ENCODE measurements at regions of chr4 and their contacts with region 1.

Region 1: DNA sequence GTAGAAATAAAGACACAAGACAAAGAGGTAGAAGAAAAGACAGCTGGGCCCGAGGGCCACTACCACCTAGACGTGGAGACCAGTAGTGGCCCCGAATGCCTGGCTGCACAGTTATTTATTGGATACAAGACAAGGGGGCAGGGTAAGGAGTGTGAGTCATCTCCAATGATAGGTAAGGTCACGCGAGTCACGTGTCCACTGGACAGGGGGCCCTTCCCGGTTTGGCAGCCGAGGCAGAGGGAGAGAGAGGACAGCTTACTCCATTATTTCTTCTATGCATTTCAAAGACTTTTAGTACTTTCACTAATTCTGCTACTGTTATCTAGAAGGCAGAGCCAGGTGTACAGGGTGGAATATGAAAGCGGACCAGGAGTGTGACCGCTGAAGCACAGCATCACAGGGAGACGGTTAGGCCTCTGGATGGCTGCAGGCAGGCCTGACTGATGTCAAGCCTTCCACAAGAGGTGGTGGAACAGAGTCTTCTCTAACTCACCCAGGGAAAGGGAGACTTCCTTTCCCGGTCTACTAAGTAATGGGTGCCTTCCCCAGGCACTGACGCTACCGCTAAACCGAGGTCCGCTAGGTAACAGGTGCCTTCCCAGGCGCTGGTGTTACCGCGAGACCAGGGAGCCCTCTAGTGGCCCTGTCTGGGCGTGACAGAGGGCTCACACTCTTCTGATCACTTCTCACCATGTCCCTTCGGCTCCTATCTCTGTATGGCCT is 44.9 kb downstream of the ZBTB49 start:
- DNase-seq: peak; percentile 55 to 84 (median 59)
- ATAC-seq: peak; percentile 86
- H3K4me3 ChIP-seq: no peak overlapping the region
- H3K27ac ChIP-seq: no peak overlapping the region
- H3K4me1 ChIP-seq: peaks cover 13 to 16% of the 10 kb centered on the region in 2 experiments; a peak in 4 of 5 replicates
- H3K27me3 ChIP-seq: peaks cover 0 to 4% of the 10 kb centered on the region in 2 experiments; a peak in 1 of 5 replicates
- CTCF ChIP-seq: peak; percentile 82 to 86 (median 83)
- EP300 ChIP-seq: no peak
- POLR2A ChIP-seq: no peak
- RAD21 ChIP-seq: peak; percentile 78 to 93

Region 2: DNA sequence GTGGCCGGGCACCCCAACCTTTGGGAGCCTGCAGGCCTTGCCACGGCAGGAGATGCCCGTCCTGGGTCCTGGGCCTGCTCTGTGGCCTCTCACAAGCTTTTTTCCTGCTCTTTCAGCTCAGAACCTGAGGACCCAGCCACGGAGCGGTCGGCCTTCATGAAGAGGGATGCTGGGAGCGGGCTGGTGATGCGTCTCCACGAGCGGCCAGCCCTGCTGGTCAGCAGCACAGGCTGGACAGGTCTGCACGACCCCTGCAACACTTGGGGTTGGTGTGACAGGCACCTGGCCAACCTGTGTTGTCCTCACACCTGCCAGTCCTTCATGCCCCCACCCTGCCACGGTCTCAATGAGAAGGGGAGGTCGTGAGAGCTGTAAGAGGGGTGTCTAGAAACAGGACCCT is 398.8 kb before region 1 on chr4:
- CTCF ChIA-PET with region 1: no interaction called
- POLR2A ChIA-PET with region 1: no interaction called
- in situ Hi-C with region 1: no loop called
- intact Hi-C with region 1: no loop called
- DNase-seq: no peak
- ATAC-seq: no peak
- H3K4me3 ChIP-seq: no peak overlapping the region
- H3K27ac ChIP-seq: no peak overlapping the region
- H3K4me1 ChIP-seq: peaks cover 9 to 17% of the 10 kb centered on the region in 2 experiments; a peak in 4 of 5 replicates
- H3K27me3 ChIP-seq: no peaks in the 10 kb centered on the region
- CTCF ChIP-seq: no peak
- EP300 ChIP-seq: no peak
- POLR2A ChIP-seq: no peak
- RAD21 ChIP-seq: no peak

Region 3: GRCh38 chr4:4248029-4248884 is 86.7 kb before region 1 on chr4 and contains the start of gene TMEM128:
- CTCF ChIA-PET with region 1: interaction called, 14 read pairs
- POLR2A ChIA-PET with region 1: interaction called, 3 read pairs
- in situ Hi-C with region 1: loop called (anchors 5 kb)
- intact Hi-C with region 1: loop called (anchors 1 kb)
- DNase-seq: peak; percentile 93 to 96 (median 94)
- ATAC-seq: peak; percentile 97
- H3K4me3 ChIP-seq: peak within 1 kb of the TSS; percentile 89
- H3K27ac ChIP-seq: peak within 1 kb of the TSS; percentile 92
- H3K4me1 ChIP-seq: peaks cover 4 to 8% of the 10 kb centered on the region in 2 experiments; a peak in 3 of 5 replicates
- H3K27me3 ChIP-seq: peaks cover 0 to 2% of the 10 kb centered on the region in 2 experiments; a peak in 1 of 5 replicates
- CTCF ChIP-seq: 0 out of 6 replicates have a peak, but pooled peaks have one; percentile 8 to 25 (median 9)
- EP300 ChIP-seq: peak; percentile 34
- POLR2A ChIP-seq: peak; percentile 96
- RAD21 ChIP-seq: 0 out of 4 replicates have a peak, but pooled peaks have one; percentile 2 to 9
- polyA plus RNA-seq, gene TMEM128: 9.1 to 11.1 TPM

Region 4: DNA sequence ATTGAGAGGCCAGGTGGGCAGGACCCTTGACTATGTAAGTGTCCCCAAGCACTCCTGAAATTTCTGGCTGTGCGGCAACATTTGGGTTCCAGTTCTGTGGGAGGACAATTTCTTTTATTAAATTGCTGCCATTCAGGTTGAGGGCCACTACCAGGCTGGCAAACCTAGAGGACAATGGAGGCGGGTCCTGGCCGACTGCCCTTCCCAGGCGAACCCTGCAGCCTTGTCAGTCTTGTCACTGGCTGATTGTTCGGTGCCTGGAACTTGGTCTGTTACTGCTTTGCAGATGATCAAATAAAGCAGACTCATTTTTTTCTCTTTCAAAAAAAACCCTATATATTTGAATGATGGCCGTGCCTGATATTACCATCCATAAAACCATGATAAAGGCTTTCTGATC is 80.3 kb before region 1 on chr4:
- CTCF ChIA-PET with region 1: interaction called, 14 read pairs
- POLR2A ChIA-PET with region 1: interaction called, 3 read pairs
- in situ Hi-C with region 1: loop called (anchors 5 kb)
- intact Hi-C with region 1: loop called (anchors 1 kb)
- DNase-seq: no peak
- ATAC-seq: no peak
- H3K4me3 ChIP-seq: no peak overlapping the region
- H3K27ac ChIP-seq: no peak overlapping the region
- H3K4me1 ChIP-seq: no peaks in the 10 kb centered on the region
- H3K27me3 ChIP-seq: peaks cover 22 to 33% of the 10 kb centered on the region in 2 experiments
- CTCF ChIP-seq: no peak
- EP300 ChIP-seq: no peak
- POLR2A ChIP-seq: no peak
- RAD21 ChIP-seq: no peak

Region 5: DNA sequence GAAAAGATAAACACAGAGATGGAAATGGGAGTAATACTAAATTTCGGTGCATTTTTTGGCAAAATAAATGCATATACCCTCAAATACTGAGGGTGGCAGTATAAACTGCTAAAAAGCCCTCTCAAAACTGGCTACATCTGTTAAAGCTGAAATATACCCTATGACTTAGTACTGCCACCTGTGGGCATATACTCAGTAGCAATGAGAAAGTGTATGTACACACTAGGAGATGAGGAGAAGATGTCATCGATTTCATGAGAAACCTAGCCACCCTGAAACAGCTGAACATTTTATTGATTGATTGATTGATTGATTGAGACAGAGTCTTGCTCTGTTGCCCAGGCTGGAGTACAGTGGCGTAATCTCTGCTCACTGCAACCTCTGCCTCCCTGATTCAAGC is 74.7 kb before region 1 on chr4:
- CTCF ChIA-PET with region 1: interaction called, 3 read pairs
- POLR2A ChIA-PET with region 1: no interaction called
- in situ Hi-C with region 1: no loop called
- intact Hi-C with region 1: loop called (anchors 1 kb)
- DNase-seq: peak in 2 of 4 experiments; percentile 36 to 54
- ATAC-seq: peak; percentile 84
- H3K4me3 ChIP-seq: no peak overlapping the region
- H3K27ac ChIP-seq: no peak overlapping the region
- H3K4me1 ChIP-seq: no peaks in the 10 kb centered on the region; a peak in 1 of 5 replicates
- H3K27me3 ChIP-seq: peaks cover 9 to 29% of the 10 kb centered on the region in 2 experiments; a peak in 4 of 5 replicates
- CTCF ChIP-seq: peak; percentile 54 to 88 (median 79)
- EP300 ChIP-seq: no peak
- POLR2A ChIP-seq: no peak
- RAD21 ChIP-seq: peak; percentile 23 to 77; a peak in 2 of 4 replicates

Region 6: GRCh38 chr4:4590546-4590945 is 255.6 kb after region 1 on chr4:
- CTCF ChIA-PET with region 1: no interaction called
- POLR2A ChIA-PET with region 1: no interaction called
- in situ Hi-C with region 1: no loop called
- intact Hi-C with region 1: no loop called
- DNase-seq: no peak
- ATAC-seq: no peak
- H3K4me3 ChIP-seq: no peak overlapping the region
- H3K27ac ChIP-seq: no peak overlapping the region
- H3K4me1 ChIP-seq: no peaks in the 10 kb centered on the region
- H3K27me3 ChIP-seq: no peaks in the 10 kb centered on the region; a peak in 1 of 5 replicates
- CTCF ChIP-seq: no peak
- EP300 ChIP-seq: no peak
- POLR2A ChIP-seq: no peak
- RAD21 ChIP-seq: no peak